Activated T-helper 2 cell treated with anti-CD3 and anti-CD28 coated beads, Interferon-gamma antibody, Interleukin-2, Interleukin-4, amounts not matched to agents 10 μg/mL and 5 μg/mL and 100 μg/mL, durations not matched to agents 14 hours and 24 hours and 36 hours (primary cell): ENCODE measurements at regions of chr4 and their contacts with region 1.

Region 1: GRCh38 chr4:143558823-143559756 is 45.6 kb downstream of the SMARCA5 start:
- DNase-seq: peak; percentile 55
- H3K4me3 Mint-ChIP-seq: peak overlapping the region; percentile 88
- H3K27ac Mint-ChIP-seq: peak overlapping the region; percentile 87
- H3K4me1 Mint-ChIP-seq: peaks cover 20% of the 10 kb centered on the region
- H3K27me3 Mint-ChIP-seq: no peaks in the 10 kb centered on the region

Region 2: DNA sequence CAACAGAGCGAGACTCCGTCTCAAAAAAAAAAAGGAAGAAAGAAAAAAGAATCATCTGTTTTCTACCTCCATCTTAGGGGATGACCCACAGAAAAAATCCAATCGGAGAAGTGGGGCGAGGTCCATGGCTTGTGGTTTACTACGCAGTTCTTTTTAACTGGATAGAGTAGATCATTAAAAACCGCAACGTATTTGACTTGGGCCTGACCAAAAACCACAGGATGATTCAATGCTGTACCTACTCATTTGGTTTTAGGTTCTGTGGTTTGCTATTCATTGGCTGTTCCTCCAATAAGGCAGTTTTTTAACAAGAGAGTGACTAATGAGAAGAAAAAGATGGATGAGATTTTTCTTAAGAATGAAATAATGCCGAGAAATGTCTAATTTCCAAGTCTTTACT is 57.7 kb after region 1 on chr4:
- intact Hi-C with region 1: loop called (anchors 5 kb)
- DNase-seq: peak; percentile 18
- H3K4me3 Mint-ChIP-seq: no peak overlapping the region
- H3K27ac Mint-ChIP-seq: no peak overlapping the region
- H3K4me1 Mint-ChIP-seq: peaks cover 20% of the 10 kb centered on the region
- H3K27me3 Mint-ChIP-seq: peaks cover 54% of the 10 kb centered on the region

Region 3: DNA sequence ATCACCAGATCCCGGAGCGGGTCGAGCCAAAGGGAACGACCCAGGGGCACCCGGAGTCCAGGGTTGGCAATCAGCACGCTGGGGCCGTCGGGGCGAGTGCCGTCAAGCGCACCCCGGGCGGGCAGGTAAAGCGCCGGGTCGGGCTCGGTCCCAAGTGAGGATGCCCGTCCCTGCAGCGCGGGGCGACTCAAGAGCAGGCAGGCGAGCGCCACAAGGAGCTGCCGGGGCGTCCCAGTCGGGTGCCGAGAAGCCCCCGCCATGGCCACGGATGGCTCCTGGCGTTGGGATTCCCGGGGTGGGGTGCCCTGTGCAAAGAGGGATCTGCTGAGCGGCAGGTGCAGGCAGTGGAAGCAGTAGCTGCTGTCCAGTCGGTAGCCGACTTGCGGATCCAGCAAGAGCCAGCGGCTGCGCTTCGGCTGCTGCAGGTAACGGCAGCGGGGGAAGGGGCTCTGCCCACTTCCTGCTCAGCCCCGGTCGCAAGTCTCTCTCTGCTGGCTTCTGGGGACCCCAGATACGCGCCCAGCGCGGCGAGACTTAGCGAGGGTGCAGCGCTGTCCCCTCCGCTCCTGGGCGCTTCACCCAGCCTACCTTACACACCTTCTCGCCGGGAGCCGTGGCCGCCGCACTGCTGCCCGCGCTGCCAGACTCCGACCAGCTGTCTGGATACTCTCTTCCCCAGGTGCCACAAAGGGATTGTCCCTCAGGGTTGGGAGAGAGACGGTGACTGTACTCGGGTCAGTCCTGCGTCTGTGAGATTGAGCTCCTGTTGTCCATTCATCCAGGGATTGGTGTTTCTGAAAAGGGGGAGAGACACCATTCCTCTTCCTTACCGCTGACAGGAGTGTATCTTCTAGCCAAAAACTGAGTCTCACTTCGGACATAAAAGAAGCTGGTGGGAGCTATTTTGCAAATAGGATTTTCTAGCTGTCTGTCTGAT is 141.6 kb after region 1 on chr4 and contains the start of gene FREM3:
- intact Hi-C with region 1: loop called (anchors 5 kb)
- DNase-seq: no peak
- H3K4me3 Mint-ChIP-seq: peak within 1 kb of the TSS; percentile 52
- H3K27ac Mint-ChIP-seq: no peak within 1 kb of the TSS
- H3K4me1 Mint-ChIP-seq: peaks cover 6% of the 10 kb centered on the region
- H3K27me3 Mint-ChIP-seq: peaks cover 56% of the 10 kb centered on the region
- total RNA-seq, gene FREM3: not detected in 2 replicates